PC-3 (cell line): ENCODE measurements at regions of chr7 and their contacts with region 1.

Region 1: DNA sequence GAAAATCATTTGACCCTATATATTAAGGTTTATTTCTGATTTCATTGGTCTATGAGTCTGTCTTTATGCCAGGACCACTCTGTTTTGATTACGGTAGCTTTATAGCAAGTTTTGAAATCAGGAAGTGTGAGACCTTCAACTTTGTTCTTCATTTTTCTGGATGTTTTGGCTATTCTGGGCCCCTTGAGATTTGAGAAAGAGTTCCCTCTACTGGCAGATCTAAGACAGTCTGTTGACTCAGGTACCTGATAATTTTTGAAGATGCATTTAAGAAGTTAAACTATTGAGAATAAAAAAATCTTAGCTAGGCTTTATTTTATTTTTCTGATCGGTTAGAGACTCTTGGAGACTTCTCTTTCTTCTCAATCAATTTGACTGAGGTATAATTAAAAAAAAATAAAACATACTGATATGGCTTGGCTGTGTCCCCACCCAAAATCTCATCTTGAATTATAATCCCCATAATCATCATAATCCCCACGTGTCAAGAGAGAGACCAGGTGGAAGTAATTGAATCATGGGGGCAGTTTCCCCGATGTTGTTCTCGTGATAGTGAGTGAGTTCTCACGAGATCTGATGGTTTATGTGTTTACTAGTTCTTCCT is 209.2 kb downstream of the SNX10 start:
- DNase-seq: peak; percentile 58
- ATAC-seq: peak; percentile 71
- H3K4me3 ChIP-seq: no peak overlapping the region
- H3K27ac ChIP-seq: no peak overlapping the region
- H3K4me1 ChIP-seq: no peaks in the 10 kb centered on the region
- H3K27me3 ChIP-seq: no peaks in the 10 kb centered on the region
- CTCF ChIP-seq: peak; percentile 79

Region 2: GRCh38 chr7:26449175-26450165 is 51.4 kb before region 1 on chr7:
- CTCF ChIA-PET with region 1: interaction called, 4 read pairs
- POLR2A ChIA-PET with region 1: no interaction called
- intact Hi-C with region 1: loop called (anchors 5 kb)
- DNase-seq: peak; percentile 81
- ATAC-seq: peak; percentile 96
- H3K4me3 ChIP-seq: peak overlapping the region; percentile 40
- H3K27ac ChIP-seq: peak overlapping the region; percentile 72
- H3K4me1 ChIP-seq: peaks cover 33% of the 10 kb centered on the region
- H3K27me3 ChIP-seq: no peaks in the 10 kb centered on the region
- CTCF ChIP-seq: no peak